IMR-90 (cell line): ENCODE measurements at regions of chr12 and their contacts with region 1.

Region 1: DNA sequence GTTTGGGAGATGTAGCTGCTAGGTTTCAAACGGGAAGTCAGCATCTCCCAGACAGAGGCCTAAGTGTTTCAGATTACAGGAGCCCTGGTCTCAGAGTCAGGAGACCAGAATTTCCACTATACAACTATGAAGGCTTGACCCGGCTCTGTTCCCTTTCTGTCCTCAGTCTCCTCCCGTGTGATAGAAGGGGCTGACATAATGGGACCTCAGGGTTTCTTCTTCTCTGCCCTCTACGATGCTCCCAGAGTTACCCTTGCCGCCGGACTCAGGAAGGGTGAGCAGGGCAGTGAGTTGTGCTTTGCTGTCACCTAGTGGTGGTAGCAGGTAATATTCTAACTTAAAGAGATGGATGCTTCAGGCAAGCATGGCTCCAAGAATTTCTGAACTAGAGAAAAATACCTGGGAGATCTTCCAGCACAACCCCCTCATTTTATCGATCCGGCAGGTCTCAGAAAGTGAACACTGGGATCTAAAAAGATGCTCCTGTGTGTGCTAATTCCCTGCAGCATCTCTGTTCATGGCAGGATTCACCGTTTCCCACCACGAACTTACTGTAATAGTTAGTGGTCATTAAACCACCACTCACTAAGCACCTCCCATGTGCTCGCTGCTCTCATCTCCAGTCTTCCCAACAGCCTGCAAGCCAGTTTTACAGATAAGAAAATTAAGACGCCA is 84.4 kb downstream of the VWF start:
- DNase-seq: peak; percentile 74
- ATAC-seq: peak; percentile 95
- H3K4me3 ChIP-seq: no peak overlapping the region
- H3K27ac ChIP-seq: no peak overlapping the region
- H3K4me1 ChIP-seq: peaks cover 8% of the 10 kb centered on the region; the same call in 1 of the 2 replicates
- H3K27me3 ChIP-seq: no peaks in the 10 kb centered on the region
- CTCF ChIP-seq: peak; percentile 96
- POLR2A ChIP-seq: no peak
- RAD21 ChIP-seq: peak; percentile 93

Region 2: GRCh38 chr12:5083955-5084849 is 955.8 kb before region 1 on chr12:
- CTCF ChIA-PET with region 1: no interaction called
- POLR2A ChIA-PET with region 1: no interaction called
- dilution Hi-C with region 1: no loop called
- in situ Hi-C with region 1: no loop called
- intact Hi-C with region 1: loop called (anchors 10 kb)
- DNase-seq: peak; percentile 71
- ATAC-seq: peak; percentile 44
- H3K4me3 ChIP-seq: no peak overlapping the region
- H3K27ac ChIP-seq: no peak overlapping the region
- H3K4me1 ChIP-seq: peaks cover 20% of the 10 kb centered on the region
- H3K27me3 ChIP-seq: peaks cover 3% of the 10 kb centered on the region; the same call in 1 of the 2 replicates
- CTCF ChIP-seq: peak; percentile 79
- POLR2A ChIP-seq: no peak
- RAD21 ChIP-seq: peak; percentile 78

Region 3: GRCh38 chr12:5745265-5745888 is 294.7 kb before region 1 on chr12:
- CTCF ChIA-PET with region 1: interaction called, 3 read pairs
- POLR2A ChIA-PET with region 1: no interaction called
- dilution Hi-C with region 1: no loop called
- in situ Hi-C with region 1: no loop called
- intact Hi-C with region 1: loop called (anchors 2 kb)
- DNase-seq: peak; percentile 58
- ATAC-seq: peak; percentile 96
- H3K4me3 ChIP-seq: no peak overlapping the region
- H3K27ac ChIP-seq: no peak overlapping the region
- H3K4me1 ChIP-seq: no peaks in the 10 kb centered on the region
- H3K27me3 ChIP-seq: peaks cover 23% of the 10 kb centered on the region
- CTCF ChIP-seq: peak; percentile 67
- POLR2A ChIP-seq: no peak
- RAD21 ChIP-seq: peak; percentile 58

Region 4: GRCh38 chr12:5965950-5966383 is 74.1 kb before region 1 on chr12:
- CTCF ChIA-PET with region 1: interaction called, 7 read pairs
- POLR2A ChIA-PET with region 1: no interaction called
- dilution Hi-C with region 1: no loop called
- in situ Hi-C with region 1: no loop called
- intact Hi-C with region 1: loop called (anchors 1 kb)
- DNase-seq: peak; percentile 34
- ATAC-seq: peak; percentile 99
- H3K4me3 ChIP-seq: no peak overlapping the region
- H3K27ac ChIP-seq: no peak overlapping the region
- H3K4me1 ChIP-seq: no peaks in the 10 kb centered on the region
- H3K27me3 ChIP-seq: peaks cover 34% of the 10 kb centered on the region
- CTCF ChIP-seq: peak; percentile 73
- POLR2A ChIP-seq: no peak
- RAD21 ChIP-seq: peak; percentile 55

Region 5: DNA sequence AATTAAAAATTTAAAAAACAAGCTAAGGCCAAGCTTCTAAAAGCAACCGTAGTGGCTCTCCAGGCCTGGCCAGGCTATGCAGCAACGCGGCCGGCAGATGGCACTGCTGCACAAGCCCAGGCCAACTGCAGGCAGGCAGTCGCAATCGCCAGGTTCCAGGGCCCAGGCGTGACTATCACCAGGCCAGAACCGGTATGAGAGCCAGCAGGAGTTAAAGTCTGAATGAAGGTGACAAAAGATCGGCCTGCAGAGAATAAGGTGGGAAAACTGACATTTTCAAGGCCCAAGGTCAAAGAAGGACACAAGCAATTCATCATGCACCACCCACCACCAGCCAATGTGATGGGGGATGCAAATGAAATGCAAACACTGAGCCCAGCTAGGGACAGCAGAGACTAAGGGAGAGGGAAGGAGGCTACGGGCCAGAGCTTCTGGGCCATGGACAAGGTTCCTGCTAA is 51.3 kb before region 1 on chr12:
- CTCF ChIA-PET with region 1: interaction called, 46 read pairs
- POLR2A ChIA-PET with region 1: interaction called, 3 read pairs
- dilution Hi-C with region 1: no loop called
- in situ Hi-C with region 1: no loop called
- intact Hi-C with region 1: loop called (anchors 1 kb)
- DNase-seq: peak; percentile 71
- ATAC-seq: peak; percentile 100
- H3K4me3 ChIP-seq: no peak overlapping the region
- H3K27ac ChIP-seq: no peak overlapping the region
- H3K4me1 ChIP-seq: no peaks in the 10 kb centered on the region
- H3K27me3 ChIP-seq: peaks cover 13% of the 10 kb centered on the region
- CTCF ChIP-seq: peak; percentile 98
- POLR2A ChIP-seq: no peak; the same call in 1 of the 2 replicates
- RAD21 ChIP-seq: peak; percentile 99

Region 6: DNA sequence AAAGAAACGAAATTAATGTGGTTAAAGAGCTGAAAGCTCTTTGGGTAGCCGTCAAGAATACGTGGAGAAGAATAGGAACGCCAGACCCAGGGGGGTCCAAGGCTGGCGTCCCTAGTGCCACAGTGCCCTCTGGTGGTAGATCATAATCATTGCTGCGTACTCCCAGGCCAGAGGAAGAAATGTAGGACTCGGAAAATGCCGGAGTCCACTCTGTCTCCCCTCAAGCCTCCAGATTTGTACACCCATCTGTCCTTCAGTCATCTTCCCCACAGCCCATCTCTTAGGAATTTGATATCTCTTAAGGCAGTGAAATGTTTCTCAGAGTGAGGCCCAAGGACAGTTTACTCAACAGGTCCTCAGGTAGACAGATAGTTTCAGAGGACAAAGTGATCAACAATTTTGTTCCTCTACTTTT is 245.0 kb after region 1 on chr12:
- CTCF ChIA-PET with region 1: interaction called, 6 read pairs
- POLR2A ChIA-PET with region 1: no interaction called
- dilution Hi-C with region 1: no loop called
- in situ Hi-C with region 1: no loop called
- intact Hi-C with region 1: loop called (anchors 1 kb)
- DNase-seq: peak; percentile 76
- ATAC-seq: peak; percentile 56
- H3K4me3 ChIP-seq: no peak overlapping the region
- H3K27ac ChIP-seq: no peak overlapping the region
- H3K4me1 ChIP-seq: peaks cover 18% of the 10 kb centered on the region
- H3K27me3 ChIP-seq: no peaks in the 10 kb centered on the region
- CTCF ChIP-seq: peak; percentile 96
- POLR2A ChIP-seq: peak; percentile 44; the same call in 1 of the 2 replicates
- RAD21 ChIP-seq: peak; percentile 99